ENCODE measurements at regions of chr12 and their contacts with region 1.

Region 1: DNA sequence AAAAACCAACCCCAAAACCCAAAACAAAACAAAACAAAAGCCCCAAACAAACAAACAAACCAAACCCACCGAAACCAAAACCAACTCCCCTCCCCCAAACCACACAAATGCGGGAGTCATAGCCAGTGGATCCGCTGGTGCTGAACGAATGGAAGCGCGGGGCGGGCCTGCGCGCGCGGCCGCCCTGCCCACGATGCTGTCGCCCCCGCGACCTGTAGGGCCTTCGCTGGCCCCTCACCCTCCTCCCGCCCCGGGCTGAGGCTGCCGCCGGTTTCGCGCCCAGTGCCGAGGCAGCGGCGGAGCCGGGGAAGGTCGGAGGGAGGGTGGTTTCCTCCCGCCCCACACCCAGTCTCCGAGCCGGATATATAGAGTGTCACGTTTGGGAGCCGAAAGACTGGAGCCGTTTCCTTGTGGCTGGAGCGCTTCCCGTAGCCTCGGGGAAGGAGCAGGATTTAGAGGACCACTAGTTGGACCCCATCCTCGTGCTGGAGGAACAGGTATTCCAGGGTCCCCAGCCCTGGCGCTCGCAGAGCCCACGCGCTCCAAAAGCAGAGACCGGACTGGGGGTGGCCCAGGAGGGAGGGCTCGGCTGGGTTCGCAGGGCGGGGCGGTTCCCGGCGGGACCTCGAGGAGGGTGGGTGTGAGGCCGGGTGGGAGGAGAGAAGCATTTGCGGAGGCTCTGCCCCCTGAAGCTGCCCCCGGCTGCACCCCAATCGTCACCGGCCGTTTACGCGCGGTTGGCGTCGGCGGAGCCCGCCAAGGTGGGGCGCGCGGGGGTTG is at the start of gene FAR2:
- DNase-seq: peak; percentile 39 to 70
- H3K4me3 ChIP-seq: peak within 1 kb of the TSS; percentile 72
- H3K27ac ChIP-seq: peak within 1 kb of the TSS; percentile 58
- H3K4me1 ChIP-seq: peaks cover 14% of the 10 kb centered on the region
- H3K27me3 ChIP-seq: no peaks in the 10 kb centered on the region
- CTCF ChIP-seq: no peak
- total RNA-seq, gene FAR2: 11.0 and 12.3 TPM in 2 replicates

Region 2: DNA sequence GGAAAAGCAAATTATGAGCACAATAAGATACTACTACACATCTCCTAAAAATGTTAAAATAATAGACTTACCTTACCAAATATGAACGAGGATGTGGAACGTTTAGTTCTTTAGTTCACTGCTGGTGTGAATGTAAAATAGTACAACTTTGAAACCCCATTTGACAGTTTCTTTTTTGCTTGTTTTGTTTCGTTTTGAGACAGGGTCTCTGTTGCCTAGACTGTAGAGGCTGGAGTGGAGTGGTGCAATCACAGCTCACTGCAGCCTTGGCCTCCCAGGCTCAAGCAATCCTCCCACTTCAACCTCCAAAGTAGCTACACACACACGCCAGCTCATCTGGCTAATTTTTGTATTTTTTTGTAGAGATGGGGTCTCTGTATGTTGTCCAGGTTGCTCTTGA is 136.4 kb before region 1 on chr12:
- CTCF ChIA-PET with region 1: no interaction called
- POLR2A ChIA-PET with region 1: no interaction called
- intact Hi-C with region 1: no loop called
- DNase-seq: no peak
- H3K4me3 ChIP-seq: no peak overlapping the region
- H3K27ac ChIP-seq: no peak overlapping the region
- H3K4me1 ChIP-seq: no peaks in the 10 kb centered on the region
- H3K27me3 ChIP-seq: no peaks in the 10 kb centered on the region
- CTCF ChIP-seq: no peak

Region 3: GRCh38 chr12:29241821-29242591 is 92.9 kb after region 1 on chr12:
- CTCF ChIA-PET with region 1: no interaction called
- POLR2A ChIA-PET with region 1: no interaction called
- intact Hi-C with region 1: loop called (anchors 2 kb)
- DNase-seq: peak; percentile 36 to 96
- H3K4me3 ChIP-seq: no peak overlapping the region; the same call in 1 of the 2 replicates
- H3K27ac ChIP-seq: peak overlapping the region; percentile 85
- H3K4me1 ChIP-seq: peaks cover 56% of the 10 kb centered on the region
- H3K27me3 ChIP-seq: no peaks in the 10 kb centered on the region
- CTCF ChIP-seq: no peak; the same call in 1 of the 2 replicates

Measured in PC-9 (cell line).